Dendritic cell treated with granulocyte-macrophage colony-stimulating factor and Interleukin-4, amounts not matched to agents 40 ng/mL and 50 ng/mL, for 4 days (primary cell): ENCODE measurements at regions of chr1 and their contacts with region 1.

Region 1: DNA sequence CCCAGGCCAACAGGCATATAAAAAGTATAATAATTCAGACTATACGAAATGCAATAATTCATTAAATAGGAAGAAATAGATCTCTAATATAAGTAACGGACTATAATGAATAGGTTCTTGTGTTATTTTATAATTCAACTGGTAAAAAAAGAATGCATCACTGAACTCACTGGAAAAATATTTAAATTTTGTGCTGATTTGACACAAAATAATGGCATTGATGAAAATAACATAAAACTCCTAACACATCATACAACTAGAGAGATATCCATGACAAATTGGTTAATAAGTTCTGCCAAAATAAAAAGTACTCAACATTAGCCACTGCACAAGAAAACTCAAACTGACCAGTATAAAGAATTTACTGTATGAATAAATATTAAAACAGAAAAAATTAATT is 57.1 kb upstream of the RAB4A start:
- H3K4me3 Mint-ChIP-seq: no peak overlapping the region
- H3K27ac Mint-ChIP-seq: no peak overlapping the region
- H3K4me1 Mint-ChIP-seq: peaks cover 21% of the 10 kb centered on the region
- H3K27me3 Mint-ChIP-seq: no peaks in the 10 kb centered on the region

Region 2: GRCh38 chr1:229094476-229095311 is 119.1 kb before region 1 on chr1:
- intact Hi-C with region 1: no loop called
- H3K4me3 Mint-ChIP-seq: no peak overlapping the region
- H3K27ac Mint-ChIP-seq: no peak overlapping the region
- H3K4me1 Mint-ChIP-seq: peaks cover 19% of the 10 kb centered on the region
- H3K27me3 Mint-ChIP-seq: peaks cover 4% of the 10 kb centered on the region

Region 3: DNA sequence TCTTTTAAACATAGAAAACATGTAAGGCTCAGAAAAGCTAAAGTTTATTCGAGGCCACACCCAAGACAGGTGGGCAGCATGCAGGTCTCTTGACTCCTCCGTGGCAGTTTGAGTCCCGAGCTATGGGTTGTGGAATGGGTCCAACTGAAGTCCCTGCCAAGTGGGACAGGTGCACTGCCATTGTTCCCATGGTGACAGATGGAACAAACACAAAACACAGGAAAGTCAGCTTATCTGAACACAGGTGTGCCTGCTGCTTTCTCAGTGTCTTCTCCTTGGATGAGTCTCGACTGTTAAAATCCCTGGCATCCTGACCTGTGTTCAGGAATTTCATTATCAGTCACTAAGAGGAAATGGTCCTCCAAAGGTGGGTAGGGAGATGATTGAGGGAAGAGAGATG is 41.9 kb before region 1 on chr1:
- intact Hi-C with region 1: loop called (anchors 2 kb)
- H3K4me3 Mint-ChIP-seq: no peak overlapping the region
- H3K27ac Mint-ChIP-seq: no peak overlapping the region
- H3K4me1 Mint-ChIP-seq: peaks cover 12% of the 10 kb centered on the region
- H3K27me3 Mint-ChIP-seq: peaks cover 8% of the 10 kb centered on the region